Ovary (tissue), 10 donors: ENCODE measurements at regions of chr1 and their contacts with region 1.

Region 1: DNA sequence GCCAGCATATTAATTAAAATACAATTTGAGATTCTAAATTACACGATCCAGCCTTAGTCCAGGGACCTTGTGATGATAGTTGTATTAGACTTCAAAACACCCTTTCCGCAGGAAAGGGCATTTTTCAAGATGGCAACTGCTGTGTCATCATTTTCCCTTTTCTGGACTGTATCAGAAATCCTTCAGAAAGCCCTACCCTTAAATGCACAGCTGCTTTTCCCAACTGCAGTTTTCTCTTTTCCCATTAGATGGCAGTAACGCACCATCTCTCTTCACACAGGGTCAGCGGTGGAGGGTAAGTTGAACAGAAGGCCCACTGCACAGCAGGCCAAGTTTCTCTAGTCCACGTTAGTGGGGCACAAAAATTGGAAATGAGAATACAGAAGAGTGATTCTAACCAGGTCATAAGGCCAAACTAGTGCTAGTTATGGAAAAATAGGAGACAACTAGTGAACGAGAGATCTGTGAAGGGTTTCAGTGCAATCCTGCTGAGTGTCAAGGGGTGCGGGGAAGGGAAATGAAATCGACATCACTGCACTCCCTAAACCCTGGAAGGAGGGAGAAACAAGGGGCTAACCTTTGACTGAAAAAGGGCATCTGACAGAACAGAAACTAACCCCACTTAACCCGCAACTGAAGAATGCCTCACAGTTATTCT is 22.1 kb upstream of the TDRD10 start:
- DNase-seq: peak in 4 of 5 donors; percentile 53 to 78 (median 64)
- H3K4me3 ChIP-seq: no peak overlapping the region
- H3K27ac ChIP-seq: peak overlapping the region in 1 of 2 donors; percentile 15
- H3K4me1 ChIP-seq: no peaks in the 10 kb centered on the region
- H3K27me3 ChIP-seq: no peaks in the 10 kb centered on the region
- CTCF ChIP-seq: peak; percentile 79 to 91 (median 90)
- EP300 ChIP-seq: peak; percentile 9
- POLR2A ChIP-seq: no peak

Region 2: GRCh38 chr1:154546264-154547063 is 66.6 kb after region 1 on chr1:
- intact Hi-C with region 1: loop called in 2 of 4 experiments (anchors 5 to 10 kb)
- DNase-seq: peak in 4 of 5 donors; percentile 41 to 51 (median 48)
- H3K4me3 ChIP-seq: no peak overlapping the region
- H3K27ac ChIP-seq: no peak overlapping the region
- H3K4me1 ChIP-seq: peaks cover 2% of the 10 kb centered on the region
- H3K27me3 ChIP-seq: no peaks in the 10 kb centered on the region
- CTCF ChIP-seq: peak in 1 of 3 donors; percentile 55
- EP300 ChIP-seq: no peak
- POLR2A ChIP-seq: no peak

Region 3: GRCh38 chr1:154870115-154870571 is 390.2 kb after region 1 on chr1 and contains the start of gene KCNN3:
- intact Hi-C with region 1: loop called in 3 of 4 experiments (anchors 5 to 10 kb)
- DNase-seq: peak; percentile 89 to 96 (median 95)
- H3K4me3 ChIP-seq: peak within 1 kb of the TSS; percentile 36
- H3K27ac ChIP-seq: no peak within 1 kb of the TSS
- H3K4me1 ChIP-seq: peaks cover 8% of the 10 kb centered on the region
- H3K27me3 ChIP-seq: no peaks in the 10 kb centered on the region
- CTCF ChIP-seq: no peak
- EP300 ChIP-seq: no peak
- POLR2A ChIP-seq: no peak
- total RNA-seq, gene KCNN3: 0.71 to 6.0 (median 1.7) TPM

Region 4: DNA sequence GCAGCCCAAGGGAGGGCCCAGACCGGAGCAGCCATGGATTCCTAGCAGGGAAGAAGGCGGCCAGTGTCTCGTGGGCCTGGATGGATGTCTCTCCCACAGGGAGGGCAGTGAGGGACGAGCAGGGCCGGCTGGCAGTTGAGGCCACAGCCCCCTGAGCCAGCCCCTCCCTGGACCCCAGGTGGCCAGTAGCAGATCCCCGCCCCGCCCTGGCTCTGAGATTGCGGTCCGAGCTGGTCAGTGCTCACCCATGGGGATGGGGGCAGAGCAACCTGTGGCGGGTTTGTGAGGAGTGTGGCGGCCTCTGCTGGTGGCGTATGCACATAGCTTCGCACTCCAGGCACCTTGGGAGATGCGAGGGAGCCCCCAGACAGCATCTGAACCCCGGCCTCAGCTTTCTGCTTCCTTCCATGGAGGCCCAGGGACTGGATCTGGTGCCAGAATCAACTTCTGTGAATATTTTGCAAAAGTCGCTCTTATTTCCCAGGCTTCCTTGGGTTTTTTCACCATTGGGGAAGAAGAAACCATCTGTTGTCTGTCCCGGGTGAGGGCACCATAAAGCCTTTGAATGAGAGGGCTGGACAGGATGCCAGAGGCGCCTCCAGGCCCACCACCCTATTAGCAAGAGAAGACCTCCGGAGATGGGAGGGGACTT is 398.6 kb after region 1 on chr1:
- intact Hi-C with region 1: loop called in 3 of 4 experiments (anchors 5 to 10 kb)
- DNase-seq: peak; percentile 69 to 88 (median 83)
- H3K4me3 ChIP-seq: no peak overlapping the region
- H3K27ac ChIP-seq: no peak overlapping the region
- H3K4me1 ChIP-seq: no peaks in the 10 kb centered on the region
- H3K27me3 ChIP-seq: no peaks in the 10 kb centered on the region
- CTCF ChIP-seq: peak; percentile 70 to 89 (median 87)
- EP300 ChIP-seq: no peak
- POLR2A ChIP-seq: no peak

Region 5: DNA sequence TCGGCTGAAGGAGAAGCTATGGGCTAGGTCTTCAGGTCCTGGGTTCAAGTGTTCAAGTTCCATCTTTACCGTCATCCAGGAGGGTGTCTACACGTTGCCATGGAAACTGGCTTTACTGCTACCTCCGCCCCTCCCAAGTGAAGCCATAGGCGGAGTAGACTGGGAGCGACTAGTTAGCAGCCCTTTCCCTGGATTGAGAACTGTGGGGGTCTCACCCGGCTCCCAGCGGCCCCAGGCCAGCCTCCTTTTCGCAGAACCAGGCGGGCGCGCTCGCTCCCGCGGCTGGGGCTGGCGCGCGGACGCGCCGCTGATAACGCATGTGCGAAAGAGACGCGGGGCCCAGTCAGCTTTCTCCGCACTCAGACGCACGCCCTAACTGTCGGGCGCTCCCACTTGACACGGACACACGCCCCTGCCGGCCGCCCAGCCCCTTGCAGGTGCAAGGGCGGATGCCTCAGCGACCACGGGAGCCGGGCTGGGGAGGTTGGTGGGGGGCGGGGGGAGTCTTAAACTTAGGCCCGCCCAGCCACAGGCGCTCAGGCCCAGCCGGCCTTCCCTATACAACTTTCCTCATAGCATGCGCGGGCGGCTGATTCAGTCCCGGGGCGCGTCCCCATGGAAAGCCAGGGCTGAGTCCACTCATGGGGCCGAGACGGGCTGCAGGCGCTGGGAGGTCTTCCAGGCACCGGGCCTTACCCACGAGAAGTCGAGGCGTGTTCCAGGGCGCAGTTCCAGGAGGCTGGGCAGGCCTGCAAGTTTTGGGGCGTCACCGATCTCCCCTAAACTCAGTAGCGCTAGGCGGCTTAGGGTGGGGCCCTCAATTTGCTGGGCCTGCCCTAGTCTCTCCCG is 591.1 kb after region 1 on chr1:
- intact Hi-C with region 1: loop called in 1 of 4 experiments (anchors 10 kb)
- DNase-seq: peak; percentile 75 to 87 (median 81)
- H3K4me3 ChIP-seq: peak overlapping the region; percentile 37
- H3K27ac ChIP-seq: peak overlapping the region; percentile 70 to 77
- H3K4me1 ChIP-seq: peaks cover 4% of the 10 kb centered on the region
- H3K27me3 ChIP-seq: no peaks in the 10 kb centered on the region
- CTCF ChIP-seq: peak; percentile 25 to 63 (median 54)
- EP300 ChIP-seq: no peak
- POLR2A ChIP-seq: no peak

Region 6: GRCh38 chr1:155172732-155173477 is 693.0 kb after region 1 on chr1 and contains the start of gene KRTCAP2:
- intact Hi-C with region 1: no loop called
- DNase-seq: peak; percentile 94 to 96 (median 96)
- H3K4me3 ChIP-seq: peak within 1 kb of the TSS; percentile 95
- H3K27ac ChIP-seq: peak within 1 kb of the TSS; percentile 56 to 80
- H3K4me1 ChIP-seq: no peaks in the 10 kb centered on the region
- H3K27me3 ChIP-seq: no peaks in the 10 kb centered on the region
- CTCF ChIP-seq: peak; percentile 92 to 98 (median 96)
- EP300 ChIP-seq: no peak
- POLR2A ChIP-seq: peak; percentile 72
- total RNA-seq, gene KRTCAP2: 96.5 to 209 (median 158) TPM